Caco-2 (cell line): ENCODE measurements at regions of chr2 and their contacts with region 1.

Region 1: GRCh38 chr2:237782181-237782580 is 16.4 kb upstream of the RBM44 start:
- DNase-seq: no peak
- H3K4me3 ChIP-seq: no peak overlapping the region
- H3K4me3 Mint-ChIP-seq: no peak overlapping the region
- H3K27ac Mint-ChIP-seq: no peak overlapping the region
- H3K4me1 ChIP-seq: no peaks in the 10 kb centered on the region
- H3K4me1 Mint-ChIP-seq: no peaks in the 10 kb centered on the region
- H3K27me3 ChIP-seq: no peaks in the 10 kb centered on the region
- H3K27me3 Mint-ChIP-seq: no peaks in the 10 kb centered on the region
- CTCF ChIP-seq: no peak

Region 2: DNA sequence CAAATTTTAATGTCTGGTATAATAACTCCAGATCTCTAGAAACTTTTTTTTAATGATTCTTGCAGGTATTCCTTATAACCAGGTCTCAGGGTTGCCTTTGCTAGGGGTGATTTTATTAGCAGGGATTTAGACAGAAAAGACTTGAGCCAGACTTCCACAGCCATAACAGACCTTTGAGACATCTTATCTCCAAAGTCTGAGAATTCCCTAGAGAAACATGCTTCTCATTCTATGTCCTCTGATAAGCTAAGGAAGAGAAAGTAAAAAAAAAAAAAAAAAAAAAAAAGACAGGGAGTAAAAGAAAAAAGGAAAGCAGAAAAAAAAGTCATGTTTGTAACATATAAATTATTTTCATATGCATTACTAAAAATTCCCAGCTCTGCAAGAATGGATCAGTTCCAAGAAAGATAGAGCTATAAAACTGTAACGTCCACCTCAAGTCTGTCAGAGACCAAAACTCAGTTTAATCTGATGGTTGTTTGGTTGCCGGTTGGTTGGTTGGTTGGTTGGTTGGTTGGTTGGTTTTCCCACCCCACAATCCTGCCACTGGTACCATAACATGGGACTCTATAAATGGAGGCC is 522.1 kb before region 1 on chr2:
- CTCF ChIA-PET with region 1: no interaction called
- POLR2A ChIA-PET with region 1: interaction called, 19 read pairs
- intact Hi-C with region 1: no loop called
- DNase-seq: no peak
- H3K4me3 ChIP-seq: no peak overlapping the region
- H3K4me3 Mint-ChIP-seq: no peak overlapping the region
- H3K27ac Mint-ChIP-seq: no peak overlapping the region
- H3K4me1 ChIP-seq: peaks cover 7% of the 10 kb centered on the region; the same call in 1 of the 2 replicates
- H3K4me1 Mint-ChIP-seq: no peaks in the 10 kb centered on the region
- H3K27me3 ChIP-seq: no peaks in the 10 kb centered on the region; the same call in 1 of the 2 replicates
- H3K27me3 Mint-ChIP-seq: no peaks in the 10 kb centered on the region
- CTCF ChIP-seq: no peak

Region 3: GRCh38 chr2:237558906-237559641 is 223.1 kb before region 1 on chr2:
- CTCF ChIA-PET with region 1: no interaction called
- POLR2A ChIA-PET with region 1: no interaction called
- intact Hi-C with region 1: no loop called
- DNase-seq: no peak
- H3K4me3 ChIP-seq: no peak overlapping the region
- H3K4me3 Mint-ChIP-seq: no peak overlapping the region
- H3K27ac Mint-ChIP-seq: no peak overlapping the region
- H3K4me1 ChIP-seq: no peaks in the 10 kb centered on the region
- H3K4me1 Mint-ChIP-seq: no peaks in the 10 kb centered on the region
- H3K27me3 ChIP-seq: no peaks in the 10 kb centered on the region
- H3K27me3 Mint-ChIP-seq: no peaks in the 10 kb centered on the region
- CTCF ChIP-seq: no peak

Region 4: DNA sequence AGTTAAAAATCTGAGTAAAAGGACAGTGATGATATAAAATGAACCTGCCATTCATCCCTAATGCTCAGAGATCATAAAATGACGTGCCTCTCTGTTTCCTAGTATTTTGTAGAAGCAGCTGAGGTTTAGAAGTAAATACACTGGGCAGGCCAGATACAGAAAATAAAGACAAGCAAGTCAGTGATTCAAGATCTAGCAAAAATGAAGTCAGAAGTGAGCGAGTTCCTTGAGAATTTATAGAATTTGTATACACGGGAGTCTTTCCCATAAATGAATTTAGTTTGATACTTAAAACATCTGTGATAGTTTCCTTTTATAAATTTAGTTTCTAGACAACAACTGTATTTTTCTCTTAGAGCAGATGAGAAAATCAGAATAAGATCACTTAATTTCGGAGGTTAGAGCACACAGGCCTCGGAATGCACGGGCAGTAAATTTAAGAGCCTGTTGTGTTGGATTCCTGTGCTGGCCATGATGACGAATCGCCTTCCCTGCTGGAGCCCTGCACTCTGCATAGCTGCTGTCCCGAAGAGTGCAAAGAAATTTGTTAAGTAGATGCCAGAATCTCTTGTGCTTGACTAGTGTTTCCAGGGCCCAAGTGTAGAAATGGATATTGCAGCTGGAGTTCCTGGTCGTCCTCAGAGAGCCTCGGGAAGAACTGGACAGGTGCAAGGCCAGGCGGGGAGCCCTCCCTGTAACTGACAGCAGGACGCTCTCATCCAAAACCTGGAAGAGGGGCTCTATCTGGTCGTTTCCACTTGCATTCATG is 67.3 kb before region 1 on chr2:
- CTCF ChIA-PET with region 1: no interaction called
- POLR2A ChIA-PET with region 1: no interaction called
- intact Hi-C with region 1: no loop called
- DNase-seq: peak; percentile 32 to 52
- H3K4me3 ChIP-seq: peak overlapping the region; percentile 43
- H3K4me3 Mint-ChIP-seq: peak overlapping the region; percentile 78
- H3K27ac Mint-ChIP-seq: peak overlapping the region; percentile 84
- H3K4me1 ChIP-seq: peaks cover 19% of the 10 kb centered on the region; the same call in 1 of the 2 replicates
- H3K4me1 Mint-ChIP-seq: peaks cover 19% of the 10 kb centered on the region
- H3K27me3 ChIP-seq: no peaks in the 10 kb centered on the region
- H3K27me3 Mint-ChIP-seq: no peaks in the 10 kb centered on the region
- CTCF ChIP-seq: no peak